ENCODE measurements at regions of chr2 and their contacts with region 1.

Region 1: DNA sequence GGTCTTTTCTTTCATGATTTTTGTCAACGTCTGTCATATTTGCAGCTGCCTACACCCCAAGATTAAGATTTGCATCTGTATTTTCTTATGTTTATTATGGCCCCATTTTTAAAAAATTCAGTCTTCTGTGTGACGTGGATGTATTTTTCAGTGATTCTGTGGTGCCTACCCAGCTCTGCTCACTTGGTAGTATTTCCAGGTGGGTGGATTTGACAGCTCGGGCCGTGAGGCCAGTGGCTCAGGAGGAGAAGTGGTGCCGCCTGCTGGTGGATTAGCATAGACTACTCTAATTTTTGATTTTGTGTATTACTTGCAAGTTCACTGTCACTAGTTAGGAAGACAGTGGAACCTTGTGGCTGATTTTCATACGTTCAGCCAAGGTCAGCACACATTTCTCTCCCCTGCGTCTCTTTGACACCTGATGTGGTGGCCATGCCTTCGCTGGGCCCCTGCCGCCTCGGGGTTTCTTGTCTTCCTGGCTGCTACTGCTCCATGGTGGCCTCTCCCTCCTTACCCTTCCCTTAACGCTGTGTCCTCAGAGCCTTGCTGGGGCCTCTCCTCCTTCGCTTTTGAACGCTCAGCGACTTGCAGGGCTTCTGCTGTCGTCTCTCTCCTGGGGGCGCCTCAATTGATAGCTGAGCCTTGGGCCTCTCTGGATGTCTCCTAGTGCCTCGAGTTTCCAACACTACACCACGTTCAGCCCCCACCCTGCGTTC is 89.3 kb downstream of the DGKD start:
- DNase-seq: peak; percentile 89
- ATAC-seq: peak; percentile 88
- H3K4me3 Mint-ChIP-seq: no peak overlapping the region
- H3K27ac Mint-ChIP-seq: peak overlapping the region; percentile 13
- H3K4me1 Mint-ChIP-seq: peaks cover 16% of the 10 kb centered on the region
- H3K27me3 Mint-ChIP-seq: no peaks in the 10 kb centered on the region

Region 2: DNA sequence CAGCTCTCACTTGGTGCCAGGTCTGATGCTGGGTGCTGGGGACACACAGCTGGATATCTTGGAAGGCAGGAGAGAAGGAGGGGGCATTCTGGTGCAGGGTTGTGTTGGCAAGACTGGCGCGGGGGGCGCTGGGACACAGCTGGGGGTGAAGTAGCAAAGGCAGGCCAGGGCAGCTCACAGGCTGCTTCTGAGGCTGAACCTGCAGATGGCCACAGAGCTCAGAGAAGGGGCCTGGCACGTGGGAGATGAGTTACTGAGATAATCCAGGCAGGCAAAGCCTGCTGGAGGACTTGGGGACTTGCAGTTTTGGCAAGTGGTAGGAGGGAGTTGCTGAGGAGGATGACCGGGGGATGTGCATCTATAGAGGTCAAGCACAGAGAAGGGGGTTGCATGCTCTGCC is 105.6 kb before region 1 on chr2:
- CTCF ChIA-PET with region 1: no interaction called
- DNase-seq: no peak
- ATAC-seq: no peak
- H3K4me3 Mint-ChIP-seq: no peak overlapping the region
- H3K27ac Mint-ChIP-seq: no peak overlapping the region
- H3K4me1 Mint-ChIP-seq: peaks cover 20% of the 10 kb centered on the region
- H3K27me3 Mint-ChIP-seq: no peaks in the 10 kb centered on the region

Region 3: GRCh38 chr2:233404222-233404621 is 39.4 kb before region 1 on chr2:
- CTCF ChIA-PET with region 1: interaction called, 193 read pairs
- DNase-seq: peak; percentile 78
- ATAC-seq: peak; percentile 71
- H3K4me3 Mint-ChIP-seq: no peak overlapping the region
- H3K27ac Mint-ChIP-seq: peak overlapping the region; percentile 27
- H3K4me1 Mint-ChIP-seq: peaks cover 50% of the 10 kb centered on the region
- H3K27me3 Mint-ChIP-seq: no peaks in the 10 kb centered on the region

Region 4: GRCh38 chr2:233409286-233409991 is 34.2 kb before region 1 on chr2:
- CTCF ChIA-PET with region 1: interaction called, 193 read pairs
- DNase-seq: peak; percentile 67
- ATAC-seq: peak; percentile 89
- H3K4me3 Mint-ChIP-seq: peak overlapping the region; percentile 4
- H3K27ac Mint-ChIP-seq: peak overlapping the region; percentile 73
- H3K4me1 Mint-ChIP-seq: peaks cover 50% of the 10 kb centered on the region
- H3K27me3 Mint-ChIP-seq: no peaks in the 10 kb centered on the region

Region 5: GRCh38 chr2:233418761-233419625 is 24.6 kb before region 1 on chr2:
- CTCF ChIA-PET with region 1: interaction called, 76 read pairs
- DNase-seq: peak; percentile 72
- ATAC-seq: peak; percentile 44
- H3K4me3 Mint-ChIP-seq: peak overlapping the region; percentile 69
- H3K27ac Mint-ChIP-seq: peak overlapping the region; percentile 92
- H3K4me1 Mint-ChIP-seq: peaks cover 91% of the 10 kb centered on the region
- H3K27me3 Mint-ChIP-seq: no peaks in the 10 kb centered on the region

Region 6: DNA sequence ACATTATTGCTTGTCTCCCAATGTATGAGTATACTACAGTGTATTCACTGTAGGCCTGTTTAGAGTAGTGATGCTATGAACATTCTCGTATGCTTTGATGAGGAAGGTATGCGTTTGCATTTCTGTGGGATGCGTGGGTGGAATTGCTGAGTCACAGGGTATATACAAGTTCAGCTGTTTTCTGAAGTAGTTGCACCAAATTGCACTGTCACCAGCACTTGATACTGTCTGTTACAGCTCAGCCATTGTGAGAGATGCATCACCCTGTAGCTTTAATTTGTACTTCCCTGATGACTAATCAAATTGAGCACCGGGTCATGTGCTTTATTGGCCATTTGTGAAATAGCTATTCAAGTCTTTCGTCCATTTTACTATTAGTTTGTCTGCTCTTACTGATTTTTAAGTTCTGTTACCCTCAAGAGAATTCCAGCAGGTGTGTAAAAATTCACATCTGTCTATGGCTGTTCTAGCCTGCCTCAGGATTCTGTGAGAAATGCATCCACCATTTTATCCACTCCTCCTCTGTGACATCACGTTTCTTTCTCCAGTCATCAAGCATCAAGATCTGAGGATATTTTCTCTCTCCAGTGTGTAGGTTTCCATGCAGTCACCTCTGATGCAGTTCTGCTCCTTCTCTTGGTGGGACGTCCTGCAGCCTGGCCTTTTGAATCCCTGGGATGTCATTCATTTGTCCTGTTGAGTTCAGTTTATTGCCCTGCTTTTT is 16.8 kb before region 1 on chr2:
- CTCF ChIA-PET with region 1: interaction called, 76 read pairs
- DNase-seq: peak; percentile 50
- ATAC-seq: no peak
- H3K4me3 Mint-ChIP-seq: no peak overlapping the region
- H3K27ac Mint-ChIP-seq: peak overlapping the region; percentile 52
- H3K4me1 Mint-ChIP-seq: peaks cover 37% of the 10 kb centered on the region
- H3K27me3 Mint-ChIP-seq: no peaks in the 10 kb centered on the region

Region 7: GRCh38 chr2:233953087-233953801 is 509.6 kb after region 1 on chr2:
- CTCF ChIA-PET with region 1: no interaction called
- DNase-seq: no peak
- ATAC-seq: no peak
- H3K4me3 Mint-ChIP-seq: no peak overlapping the region
- H3K27ac Mint-ChIP-seq: no peak overlapping the region
- H3K4me1 Mint-ChIP-seq: no peaks in the 10 kb centered on the region
- H3K27me3 Mint-ChIP-seq: peaks cover 40% of the 10 kb centered on the region